Breast epithelium (tissue), 4 donors: ENCODE measurements at regions of chr4 and their contacts with region 1.

Region 1: DNA sequence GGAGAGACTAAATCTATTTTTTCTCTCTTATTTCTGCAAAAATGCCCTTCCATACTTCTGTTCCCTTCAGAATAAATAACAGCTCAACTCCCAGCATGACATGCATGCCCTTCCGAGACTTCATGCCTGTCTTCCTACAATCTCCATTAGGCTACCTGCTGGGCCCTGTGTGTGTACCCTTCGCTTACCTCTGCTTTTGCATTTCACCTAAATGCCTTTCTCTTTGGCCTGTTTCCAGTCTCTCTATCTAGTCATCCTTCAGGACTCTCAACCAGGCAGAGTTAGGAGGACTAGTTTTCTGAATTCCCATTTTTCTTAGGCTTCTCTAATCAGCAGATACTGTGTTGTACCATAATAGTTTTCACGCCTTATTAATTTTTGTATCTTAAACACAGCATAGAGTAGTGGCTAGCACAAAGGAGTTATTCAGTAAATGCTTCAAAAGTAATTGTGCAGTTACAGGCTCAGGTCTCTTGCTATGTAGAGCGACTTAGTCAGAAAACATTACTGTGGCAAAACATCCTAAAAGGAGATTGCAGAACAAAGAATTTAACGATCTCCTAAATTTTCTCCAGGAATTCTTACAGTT is 20.5 kb downstream of the SEPTIN11 start:
- DNase-seq: no peak
- H3K4me3 ChIP-seq: no peak overlapping the region
- H3K27ac ChIP-seq: no peak overlapping the region
- H3K4me1 ChIP-seq: no peaks in the 10 kb centered on the region
- H3K27me3 ChIP-seq: no peaks in the 10 kb centered on the region
- CTCF ChIP-seq: no peak
- POLR2A ChIP-seq: no peak

Region 2: DNA sequence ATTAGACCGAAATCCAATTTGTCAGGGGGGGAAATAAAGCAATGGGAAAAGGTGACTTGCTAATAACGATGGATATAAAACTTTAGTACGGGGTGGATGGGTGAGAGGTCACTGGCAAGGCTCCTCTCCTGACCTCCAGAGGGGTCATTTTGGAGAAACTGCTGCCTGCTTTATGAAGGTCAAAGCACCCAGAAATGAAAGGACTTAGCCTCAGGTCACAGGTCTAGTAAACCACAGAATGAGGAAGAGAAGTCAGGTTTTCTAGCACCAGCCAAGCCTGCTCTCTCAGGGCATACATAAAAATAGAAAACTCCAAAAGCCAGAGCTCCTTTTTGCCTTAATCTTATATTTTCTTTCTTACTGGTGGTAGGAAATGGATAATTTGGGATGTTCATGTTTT is 400.8 kb before region 1 on chr4:
- intact Hi-C with region 1: loop called (anchors 5 kb)
- DNase-seq: peak in 1 of 2 donors; percentile 44
- H3K4me3 ChIP-seq: no peak overlapping the region
- H3K27ac ChIP-seq: peak overlapping the region; percentile 26 to 85
- H3K4me1 ChIP-seq: peaks cover 0 to 13% of the 10 kb centered on the region in 2 donors
- H3K27me3 ChIP-seq: no peaks in the 10 kb centered on the region
- CTCF ChIP-seq: no peak
- POLR2A ChIP-seq: no peak